ENCODE measurements at regions of chr13 and their contacts with region 1.

Region 1: DNA sequence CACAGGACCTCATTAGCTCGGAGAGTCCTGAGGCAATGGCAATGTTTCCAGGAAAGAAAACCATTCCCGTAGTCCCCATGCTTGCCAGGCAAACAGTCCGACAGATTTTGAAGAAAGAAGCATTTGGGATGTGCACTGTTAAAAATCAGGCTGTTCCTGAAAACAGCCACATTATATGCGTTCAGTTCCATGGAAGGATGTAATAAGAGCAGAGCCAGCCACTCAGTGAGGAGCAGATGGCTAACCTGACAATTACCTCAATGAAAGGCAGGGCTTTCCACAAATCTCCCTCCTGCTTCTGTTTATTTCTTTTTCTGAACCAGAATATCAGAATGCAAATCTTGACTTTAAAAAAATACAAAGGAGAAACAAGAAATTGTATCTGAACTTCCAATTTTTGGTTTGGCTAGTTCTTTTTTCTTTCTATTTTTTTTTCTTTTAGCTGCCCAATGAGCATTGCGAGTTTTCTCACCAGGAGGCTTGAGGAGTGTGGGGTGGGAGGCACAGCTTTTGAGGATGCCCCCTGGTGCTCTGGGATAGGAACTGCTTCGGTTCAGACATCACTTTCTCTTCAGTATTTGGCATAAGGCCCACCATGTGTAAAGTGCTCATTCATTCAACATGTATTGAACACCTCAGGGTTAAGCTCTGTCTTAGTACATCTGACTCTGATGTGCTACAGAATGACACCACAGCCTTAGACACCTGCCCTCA is 124.2 kb downstream of the TBC1D4 start:
- DNase-seq: peak; percentile 61
- ATAC-seq: peak; percentile 92
- H3K4me3 Mint-ChIP-seq: no peak overlapping the region
- H3K27ac Mint-ChIP-seq: no peak overlapping the region
- H3K4me1 Mint-ChIP-seq: peaks cover 23% of the 10 kb centered on the region
- H3K27me3 Mint-ChIP-seq: no peaks in the 10 kb centered on the region

Region 2: DNA sequence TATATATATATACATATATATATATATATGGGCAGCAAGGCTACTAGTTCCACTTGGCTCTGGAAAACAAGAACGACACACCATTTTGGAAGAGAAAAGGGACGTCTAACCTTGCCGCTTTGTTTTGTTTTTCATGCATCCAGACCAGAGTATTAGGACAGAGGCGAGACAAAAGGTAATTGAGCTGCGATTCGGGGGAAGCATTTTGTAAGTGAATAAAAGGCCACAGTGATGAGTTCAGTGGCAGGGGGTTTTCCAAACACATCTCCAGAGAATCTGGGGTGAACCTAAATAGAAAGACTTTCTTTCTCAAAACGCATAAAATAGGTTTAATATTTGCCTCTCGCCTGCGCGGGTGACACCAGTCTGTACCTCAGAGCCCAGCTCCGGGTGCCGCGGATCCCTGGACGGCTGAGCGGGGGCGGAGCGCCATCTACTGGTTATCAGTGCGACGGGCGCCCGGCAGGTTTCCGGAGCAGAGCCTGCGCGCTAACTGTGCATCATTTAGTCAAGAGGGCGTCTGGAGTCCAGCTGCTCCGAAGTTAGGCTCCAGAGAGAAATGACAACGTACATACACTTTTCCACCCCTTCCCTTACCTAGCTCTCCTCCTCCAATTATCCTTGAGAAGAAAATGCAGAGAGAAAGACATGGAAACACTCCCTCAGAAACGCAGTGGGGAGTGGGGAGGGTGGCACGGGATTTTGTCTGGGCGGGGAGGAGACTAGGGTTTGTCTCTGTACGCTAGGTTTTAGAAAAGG is 138.1 kb before region 1 on chr13:
- CTCF ChIA-PET with region 1: interaction called, 10 read pairs
- DNase-seq: peak; percentile 84
- ATAC-seq: peak; percentile 98
- H3K4me3 Mint-ChIP-seq: peak overlapping the region; percentile 12
- H3K27ac Mint-ChIP-seq: no peak overlapping the region
- H3K4me1 Mint-ChIP-seq: peaks cover 8% of the 10 kb centered on the region
- H3K27me3 Mint-ChIP-seq: peaks cover 23% of the 10 kb centered on the region